ENCODE measurements at regions of chr1 and their contacts with region 1.

Region 1: GRCh38 chr1:184577319-184577718 is 177.3 kb downstream of the EDEM3 start:
- DNase-seq: no peak

Region 2: GRCh38 chr1:184632415-184633175 is 55.3 kb after region 1 on chr1:
- intact Hi-C with region 1: no loop called
- DNase-seq: no peak

Region 3: GRCh38 chr1:184649451-184649888 is 72.2 kb after region 1 on chr1:
- intact Hi-C with region 1: no loop called
- DNase-seq: peak in 1 of 10 donors; percentile 82

Region 4: GRCh38 chr1:184664042-184664655 is 86.8 kb after region 1 on chr1:
- intact Hi-C with region 1: loop called (anchors 5 kb)
- DNase-seq: peak; percentile 72 to 97 (median 85)